Psoas muscle (tissue), 8 donors: ENCODE measurements at regions of chr16 and their contacts with region 1.

Region 1: GRCh38 chr16:78800523-78800922 is 701.1 kb downstream of the WWOX start:
- DNase-seq: no peak
- ATAC-seq: no peak
- H3K4me3 ChIP-seq: no peak overlapping the region
- H3K27ac ChIP-seq: no peak overlapping the region
- H3K4me1 ChIP-seq: no peaks in the 10 kb centered on the region
- H3K27me3 ChIP-seq: no peaks in the 10 kb centered on the region
- CTCF ChIP-seq: no peak

Region 2: DNA sequence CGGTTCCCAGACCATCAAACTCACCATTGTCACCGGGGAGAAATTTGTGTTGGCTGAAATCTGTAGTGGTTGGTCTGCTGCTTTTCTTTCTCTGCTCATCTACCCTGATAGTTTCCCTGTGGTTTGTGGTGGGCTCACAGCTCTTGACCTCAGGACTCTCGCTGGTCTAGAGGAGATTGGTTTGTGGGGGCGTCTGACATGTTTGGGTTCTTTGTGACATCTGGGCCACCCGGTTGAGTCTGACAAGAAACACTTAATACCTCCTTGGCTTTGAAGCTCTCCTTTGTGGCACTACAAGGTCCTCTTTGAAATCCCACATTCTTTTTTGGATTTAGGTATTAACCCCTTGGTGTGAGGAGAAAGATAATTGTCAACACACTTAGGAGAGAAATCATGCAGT is 39.1 kb before region 1 on chr16:
- intact Hi-C with region 1: no loop called
- DNase-seq: no peak
- ATAC-seq: no peak
- H3K4me3 ChIP-seq: no peak overlapping the region
- H3K27ac ChIP-seq: no peak overlapping the region
- H3K4me1 ChIP-seq: no peaks in the 10 kb centered on the region
- H3K27me3 ChIP-seq: no peaks in the 10 kb centered on the region
- CTCF ChIP-seq: no peak

Region 3: GRCh38 chr16:78811247-78811646 is 10.7 kb after region 1 on chr16:
- intact Hi-C with region 1: loop called in 1 of 2 experiments (anchors 1 kb)
- DNase-seq: no peak
- ATAC-seq: no peak
- H3K4me3 ChIP-seq: no peak overlapping the region
- H3K27ac ChIP-seq: no peak overlapping the region
- H3K4me1 ChIP-seq: peaks cover 11% of the 10 kb centered on the region
- H3K27me3 ChIP-seq: no peaks in the 10 kb centered on the region
- CTCF ChIP-seq: no peak